IMR-90 (cell line): ENCODE measurements at regions of chr19 and their contacts with region 1.

Region 1: DNA sequence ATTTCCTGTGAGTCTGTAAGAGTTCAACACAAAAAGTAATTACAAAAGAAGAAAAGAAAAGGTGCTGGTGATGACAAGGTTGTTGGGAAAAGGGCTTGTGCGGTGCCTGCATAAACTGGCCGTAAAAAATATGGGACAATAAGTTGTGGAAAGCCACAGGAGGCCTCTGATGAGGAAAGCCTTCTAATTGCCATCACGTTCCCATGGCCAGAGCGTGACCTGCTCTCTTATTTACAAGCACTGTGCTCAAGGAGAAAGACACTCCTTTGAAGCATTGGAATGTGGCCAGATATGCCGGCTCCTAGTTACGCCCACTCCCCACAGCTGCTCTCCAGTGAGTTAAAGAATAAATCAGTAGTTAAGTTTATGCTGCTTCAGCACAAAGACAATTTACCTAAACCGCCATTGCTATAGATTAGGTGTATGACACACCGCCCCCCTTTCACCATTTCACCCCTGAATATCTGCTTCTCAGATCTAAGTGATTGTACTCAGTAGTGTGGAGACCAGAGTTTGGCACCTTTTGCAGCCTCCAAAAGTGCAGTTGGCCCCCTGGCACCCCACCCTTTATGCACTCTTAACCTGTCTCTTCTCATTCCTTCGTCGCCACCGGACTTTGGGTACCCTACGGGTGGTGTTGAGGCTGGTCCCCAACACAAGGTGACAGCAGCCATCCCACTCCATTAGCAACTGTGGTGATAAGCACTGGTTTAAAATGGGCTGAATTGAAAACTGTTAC is 8.1 kb upstream of the PGLYRP1 start:
- DNase-seq: no peak
- ATAC-seq: no peak
- H3K4me3 ChIP-seq: no peak overlapping the region
- H3K27ac ChIP-seq: no peak overlapping the region
- H3K4me1 ChIP-seq: no peaks in the 10 kb centered on the region
- H3K27me3 ChIP-seq: peaks cover 18% of the 10 kb centered on the region
- CTCF ChIP-seq: no peak
- POLR2A ChIP-seq: no peak
- RAD21 ChIP-seq: no peak

Region 2: GRCh38 chr19:46040952-46041500 is 10.0 kb after region 1 on chr19 and contains the start of gene IGFL4:
- CTCF ChIA-PET with region 1: interaction called, 13 read pairs
- POLR2A ChIA-PET with region 1: no interaction called
- dilution Hi-C with region 1: no loop called
- in situ Hi-C with region 1: no loop called
- intact Hi-C with region 1: no loop called
- DNase-seq: no peak
- ATAC-seq: peak; percentile 32; the same call in 1 of the 2 replicates
- H3K4me3 ChIP-seq: no peak within 1 kb of the TSS
- H3K27ac ChIP-seq: no peak within 1 kb of the TSS
- H3K4me1 ChIP-seq: no peaks in the 10 kb centered on the region
- H3K27me3 ChIP-seq: peaks cover 53% of the 10 kb centered on the region
- CTCF ChIP-seq: no peak
- POLR2A ChIP-seq: no peak
- RAD21 ChIP-seq: no peak
- total RNA-seq, gene IGFL4: not detected in 2 replicates

Region 3: DNA sequence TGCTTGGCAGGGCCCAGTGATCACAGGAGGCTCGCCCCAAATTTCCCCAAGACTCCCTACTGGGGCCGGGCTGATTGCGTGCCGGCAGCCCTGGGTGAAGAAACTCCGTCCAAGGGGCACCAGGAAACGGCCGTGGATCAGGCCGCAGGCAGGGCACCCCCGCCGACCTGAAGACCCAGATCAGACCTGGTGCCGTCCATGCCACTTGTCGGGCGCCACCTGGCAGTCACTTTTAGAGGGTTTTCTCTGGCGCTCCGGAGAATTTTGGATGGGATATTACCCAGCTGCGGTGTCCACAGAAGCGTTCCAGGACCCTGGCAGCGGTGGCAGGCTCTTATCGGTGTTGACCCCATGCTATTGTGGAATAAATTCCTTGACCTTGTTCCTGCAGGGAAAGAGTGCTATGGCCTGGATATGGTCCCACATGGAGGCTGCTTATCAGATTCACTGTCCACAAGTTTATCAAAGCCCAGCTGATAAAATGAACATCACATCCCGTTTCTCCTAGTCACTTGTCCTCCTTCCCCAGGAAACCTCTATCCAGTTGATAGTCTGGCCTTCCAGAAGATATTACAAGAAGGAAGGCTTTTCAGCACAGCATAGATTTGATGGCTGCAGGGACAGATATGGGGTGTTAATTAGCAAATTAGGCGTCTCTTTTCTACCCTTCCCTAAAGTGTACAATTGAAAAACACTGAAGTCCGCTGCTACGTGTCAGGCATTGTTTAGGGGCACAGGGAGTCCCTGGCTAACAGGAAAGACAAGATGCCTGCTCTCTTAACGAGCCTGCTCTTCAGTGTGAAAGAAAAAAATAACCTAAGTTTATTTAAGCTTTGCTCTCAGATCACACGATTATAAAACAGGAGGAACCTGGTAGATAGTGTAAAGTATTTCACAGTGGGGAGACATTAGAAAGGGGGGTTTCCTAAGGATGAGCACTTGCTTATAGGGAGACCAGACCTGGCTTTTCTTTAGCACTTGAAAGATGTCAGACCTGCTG is 155.4 kb after region 1 on chr19:
- CTCF ChIA-PET with region 1: interaction called, 7 read pairs
- POLR2A ChIA-PET with region 1: no interaction called
- dilution Hi-C with region 1: no loop called
- in situ Hi-C with region 1: no loop called
- intact Hi-C with region 1: loop called (anchors 2 kb)
- DNase-seq: no peak
- ATAC-seq: no peak
- H3K4me3 ChIP-seq: no peak overlapping the region
- H3K27ac ChIP-seq: no peak overlapping the region
- H3K4me1 ChIP-seq: no peaks in the 10 kb centered on the region
- H3K27me3 ChIP-seq: peaks cover 54% of the 10 kb centered on the region
- CTCF ChIP-seq: no peak
- POLR2A ChIP-seq: no peak
- RAD21 ChIP-seq: no peak

Region 4: GRCh38 chr19:46265217-46265828 is 234.3 kb after region 1 on chr19:
- CTCF ChIA-PET with region 1: interaction called, 4 read pairs
- POLR2A ChIA-PET with region 1: no interaction called
- dilution Hi-C with region 1: no loop called
- in situ Hi-C with region 1: loop called (anchors 5 kb)
- intact Hi-C with region 1: loop called (anchors 1 kb)
- DNase-seq: peak; percentile 74
- ATAC-seq: peak; percentile 99
- H3K4me3 ChIP-seq: no peak overlapping the region
- H3K27ac ChIP-seq: no peak overlapping the region
- H3K4me1 ChIP-seq: no peaks in the 10 kb centered on the region
- H3K27me3 ChIP-seq: peaks cover 35% of the 10 kb centered on the region
- CTCF ChIP-seq: peak; percentile 91
- POLR2A ChIP-seq: no peak
- RAD21 ChIP-seq: peak; percentile 85